Caco-2 (cell line): ENCODE measurements at regions of chr1 and their contacts with region 1.

Region 1: GRCh38 chr1:26233903-26234643 is at the start of gene CEP85:
- DNase-seq: peak; percentile 96
- H3K4me3 ChIP-seq: peak within 1 kb of the TSS; percentile 95
- H3K4me3 Mint-ChIP-seq: peak within 1 kb of the TSS; percentile 88
- H3K27ac Mint-ChIP-seq: peak within 1 kb of the TSS; percentile 89
- H3K4me1 ChIP-seq: peaks cover 7% of the 10 kb centered on the region
- H3K4me1 Mint-ChIP-seq: peaks cover 23% of the 10 kb centered on the region
- H3K27me3 ChIP-seq: no peaks in the 10 kb centered on the region
- H3K27me3 Mint-ChIP-seq: no peaks in the 10 kb centered on the region
- CTCF ChIP-seq: peak; percentile 66 to 83
- total RNA-seq, gene CEP85: 19.7 and 22.4 TPM in 2 replicates

Region 2: GRCh38 chr1:26169669-26170471 is 64.2 kb before region 1 on chr1 and contains the start of gene ZNF593:
- CTCF ChIA-PET with region 1: interaction called, 58 read pairs
- POLR2A ChIA-PET with region 1: interaction called, 10 read pairs
- intact Hi-C with region 1: loop called (anchors 1 kb)
- DNase-seq: peak; percentile 90 to 92
- H3K4me3 ChIP-seq: peak within 1 kb of the TSS; percentile 81
- H3K4me3 Mint-ChIP-seq: peak within 1 kb of the TSS; percentile 79
- H3K27ac Mint-ChIP-seq: peak within 1 kb of the TSS; percentile 84
- H3K4me1 ChIP-seq: no peaks in the 10 kb centered on the region
- H3K4me1 Mint-ChIP-seq: peaks cover 2% of the 10 kb centered on the region
- H3K27me3 ChIP-seq: no peaks in the 10 kb centered on the region
- H3K27me3 Mint-ChIP-seq: no peaks in the 10 kb centered on the region
- CTCF ChIP-seq: peak; percentile 71 to 81
- total RNA-seq, gene ZNF593: 50.0 and 50.8 TPM in 2 replicates

Region 3: GRCh38 chr1:26177182-26177684 is 56.8 kb before region 1 on chr1 and contains the start of gene CNKSR1:
- CTCF ChIA-PET with region 1: interaction called, 18 read pairs
- POLR2A ChIA-PET with region 1: interaction called, 4 read pairs
- intact Hi-C with region 1: no loop called
- DNase-seq: peak; percentile 79 to 82
- H3K4me3 ChIP-seq: peak within 1 kb of the TSS; percentile 49
- H3K4me3 Mint-ChIP-seq: peak within 1 kb of the TSS; percentile 85
- H3K27ac Mint-ChIP-seq: peak within 1 kb of the TSS; percentile 87
- H3K4me1 ChIP-seq: no peaks in the 10 kb centered on the region
- H3K4me1 Mint-ChIP-seq: peaks cover 7% of the 10 kb centered on the region
- H3K27me3 ChIP-seq: no peaks in the 10 kb centered on the region
- H3K27me3 Mint-ChIP-seq: no peaks in the 10 kb centered on the region
- CTCF ChIP-seq: peak; percentile 16 to 53
- total RNA-seq, gene CNKSR1: 15.6 and 16.1 TPM in 2 replicates

Region 4: GRCh38 chr1:26190373-26190987 is 43.6 kb before region 1 on chr1 and contains the start of gene CATSPER4:
- CTCF ChIA-PET with region 1: interaction called, 36 read pairs
- POLR2A ChIA-PET with region 1: no interaction called
- intact Hi-C with region 1: loop called (anchors 5 kb)
- DNase-seq: peak; percentile 60 to 68
- H3K4me3 ChIP-seq: no peak within 1 kb of the TSS
- H3K4me3 Mint-ChIP-seq: no peak within 1 kb of the TSS
- H3K27ac Mint-ChIP-seq: no peak within 1 kb of the TSS
- H3K4me1 ChIP-seq: no peaks in the 10 kb centered on the region
- H3K4me1 Mint-ChIP-seq: peaks cover 14% of the 10 kb centered on the region
- H3K27me3 ChIP-seq: no peaks in the 10 kb centered on the region
- H3K27me3 Mint-ChIP-seq: no peaks in the 10 kb centered on the region
- CTCF ChIP-seq: peak; percentile 26 to 43
- total RNA-seq, gene CATSPER4: 0.20 TPM in 1 of 2 replicates, not detected in the other

Region 5: DNA sequence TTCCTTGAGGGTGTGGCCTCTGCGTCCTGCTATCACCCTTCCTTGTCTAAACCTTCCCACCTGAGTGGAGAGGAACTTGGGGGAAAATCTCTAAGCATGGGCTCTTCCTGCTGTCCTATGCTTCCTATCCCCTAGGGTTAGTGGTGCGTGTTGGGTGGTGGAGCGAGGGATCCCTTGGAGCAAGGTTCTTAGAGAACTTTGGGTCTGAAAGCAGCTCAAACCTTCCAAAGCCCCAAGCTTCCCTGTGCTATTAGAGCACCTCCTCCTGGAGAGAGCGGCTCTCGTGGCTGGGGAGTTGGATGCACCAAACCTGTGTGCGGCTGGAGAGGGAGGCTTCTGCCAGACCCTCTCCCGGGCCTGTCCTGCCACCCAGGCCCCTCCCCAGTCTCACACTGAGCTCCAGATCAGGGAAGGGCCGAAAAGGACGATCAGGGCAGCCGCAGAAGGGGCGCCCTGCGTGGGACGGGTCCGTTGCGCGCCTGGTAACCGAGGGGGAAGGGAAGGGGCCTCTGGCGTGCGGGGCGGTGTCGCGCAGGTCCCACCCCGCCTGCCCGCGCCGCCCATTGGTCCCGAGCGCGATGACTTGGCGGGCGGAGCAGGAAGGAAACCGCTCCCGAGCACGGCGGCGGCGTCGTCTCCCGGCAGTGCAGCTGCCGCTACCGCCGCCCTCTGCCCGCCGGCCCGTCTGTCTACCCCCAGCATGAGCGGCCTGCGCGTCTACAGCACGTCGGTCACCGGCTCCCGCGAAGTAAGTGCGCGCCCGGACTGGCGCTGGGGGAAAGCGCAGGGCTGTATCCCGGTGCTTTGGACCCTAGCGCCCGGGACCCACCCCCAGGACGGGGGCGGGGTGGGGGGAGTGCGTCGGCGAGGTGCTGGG is 45.6 kb after region 1 on chr1 and contains the start of gene SH3BGRL3:
- CTCF ChIA-PET with region 1: interaction called, 4 read pairs
- POLR2A ChIA-PET with region 1: no interaction called
- intact Hi-C with region 1: loop called (anchors 2 kb)
- DNase-seq: peak; percentile 76 to 86
- H3K4me3 ChIP-seq: peak within 1 kb of the TSS; percentile 82
- H3K4me3 Mint-ChIP-seq: peak within 1 kb of the TSS; percentile 88
- H3K27ac Mint-ChIP-seq: peak within 1 kb of the TSS; percentile 81
- H3K4me1 ChIP-seq: peaks cover 47% of the 10 kb centered on the region
- H3K4me1 Mint-ChIP-seq: peaks cover 36% of the 10 kb centered on the region
- H3K27me3 ChIP-seq: no peaks in the 10 kb centered on the region
- H3K27me3 Mint-ChIP-seq: no peaks in the 10 kb centered on the region
- CTCF ChIP-seq: peak in 1 of 2 experiments; percentile 58
- total RNA-seq, gene SH3BGRL3: 73.4 and 74.3 TPM in 2 replicates